CD8-positive, alpha-beta T cell (primary cell): ENCODE measurements at regions of chr12 and their contacts with region 1.

Region 1: GRCh38 chr12:118357257-118358007 is 15.3 kb downstream of the TAOK3 start:
- DNase-seq: peak in 6 of 9 experiments; percentile 33 to 87 (median 60)
- ATAC-seq: peak; percentile 79
- H3K4me3 ChIP-seq: peak overlapping the region; percentile 5 to 9
- H3K4me3 Mint-ChIP-seq: peak overlapping the region; percentile 94
- H3K27ac ChIP-seq: peak overlapping the region; percentile 35 to 77
- H3K27ac Mint-ChIP-seq: peak overlapping the region; percentile 91
- H3K4me1 ChIP-seq: peaks cover 35% of the 10 kb centered on the region
- H3K4me1 Mint-ChIP-seq: peaks cover 65% of the 10 kb centered on the region
- H3K27me3 ChIP-seq: no peaks in the 10 kb centered on the region
- H3K27me3 Mint-ChIP-seq: no peaks in the 10 kb centered on the region
- CTCF ChIP-seq: peak; percentile 24

Region 2: GRCh38 chr12:118307069-118307954 is 50.1 kb before region 1 on chr12:
- CTCF ChIA-PET with region 1: no interaction called
- POLR2A ChIA-PET with region 1: interaction called, 3 read pairs
- intact Hi-C with region 1: loop called in 1 of 2 experiments (anchors 5 kb)
- DNase-seq: peak in 2 of 9 experiments; percentile 13 to 20
- ATAC-seq: peak; percentile 20
- H3K4me3 ChIP-seq: no peak overlapping the region
- H3K4me3 Mint-ChIP-seq: peak overlapping the region; percentile 13
- H3K27ac ChIP-seq: peak overlapping the region in 1 of 2 experiments; percentile 41
- H3K27ac Mint-ChIP-seq: no peak overlapping the region
- H3K4me1 ChIP-seq: peaks cover under 1% of the 10 kb centered on the region
- H3K4me1 Mint-ChIP-seq: peaks cover 47% of the 10 kb centered on the region
- H3K27me3 ChIP-seq: no peaks in the 10 kb centered on the region
- H3K27me3 Mint-ChIP-seq: no peaks in the 10 kb centered on the region
- CTCF ChIP-seq: no peak